ENCODE measurements at regions of chr4 and their contacts with region 1.

Region 1: DNA sequence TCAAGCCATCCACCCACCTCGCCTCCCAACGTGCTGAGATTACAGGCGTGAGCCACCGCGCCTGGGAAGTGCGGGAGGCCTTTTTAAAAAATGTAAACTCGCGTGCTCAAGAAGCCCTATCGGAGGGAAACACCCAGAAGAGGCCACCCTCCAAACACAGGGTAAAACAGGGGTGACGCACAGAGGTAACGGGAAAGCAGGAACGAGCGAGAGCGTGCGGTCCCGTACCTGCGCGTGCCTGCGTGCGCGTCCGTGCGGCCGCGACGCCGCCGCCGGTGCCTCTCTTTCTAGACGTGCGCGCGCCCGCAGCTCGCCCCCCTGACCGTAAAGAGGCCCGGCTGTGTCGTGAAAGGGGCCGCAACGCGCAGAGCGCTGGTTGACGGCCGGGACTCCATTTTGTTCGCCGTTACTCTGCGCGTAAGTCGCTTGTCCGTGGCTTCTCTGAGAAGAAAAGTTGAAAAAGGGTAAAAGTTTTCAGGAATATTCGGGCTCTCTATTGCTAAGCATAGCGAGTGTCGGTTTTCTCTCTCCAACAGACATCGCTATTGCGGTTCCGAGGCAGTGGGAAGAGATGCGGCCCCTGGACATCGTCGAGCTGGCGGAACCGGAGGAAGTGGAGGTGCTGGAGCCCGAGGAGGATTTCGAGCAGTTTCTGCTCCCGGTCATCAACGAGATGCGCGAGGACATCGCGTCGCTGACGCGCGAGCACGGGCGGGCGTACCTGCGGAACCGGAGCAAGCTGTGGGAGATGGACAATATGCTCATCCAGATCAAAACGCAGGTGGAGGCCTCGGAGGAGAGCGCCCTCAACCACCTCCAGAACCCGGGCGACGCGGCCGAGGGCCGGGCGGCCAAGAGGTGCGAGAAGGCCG is at the start of gene MRFAP1:
- DNase-seq: peak; percentile 96
- H3K4me3 Mint-ChIP-seq: peak within 1 kb of the TSS; percentile 98
- H3K27ac Mint-ChIP-seq: peak within 1 kb of the TSS; percentile 99
- H3K4me1 Mint-ChIP-seq: peaks cover 28% of the 10 kb centered on the region
- H3K27me3 Mint-ChIP-seq: no peaks in the 10 kb centered on the region
- total RNA-seq, gene MRFAP1: 150 to 151 TPM

Region 2: DNA sequence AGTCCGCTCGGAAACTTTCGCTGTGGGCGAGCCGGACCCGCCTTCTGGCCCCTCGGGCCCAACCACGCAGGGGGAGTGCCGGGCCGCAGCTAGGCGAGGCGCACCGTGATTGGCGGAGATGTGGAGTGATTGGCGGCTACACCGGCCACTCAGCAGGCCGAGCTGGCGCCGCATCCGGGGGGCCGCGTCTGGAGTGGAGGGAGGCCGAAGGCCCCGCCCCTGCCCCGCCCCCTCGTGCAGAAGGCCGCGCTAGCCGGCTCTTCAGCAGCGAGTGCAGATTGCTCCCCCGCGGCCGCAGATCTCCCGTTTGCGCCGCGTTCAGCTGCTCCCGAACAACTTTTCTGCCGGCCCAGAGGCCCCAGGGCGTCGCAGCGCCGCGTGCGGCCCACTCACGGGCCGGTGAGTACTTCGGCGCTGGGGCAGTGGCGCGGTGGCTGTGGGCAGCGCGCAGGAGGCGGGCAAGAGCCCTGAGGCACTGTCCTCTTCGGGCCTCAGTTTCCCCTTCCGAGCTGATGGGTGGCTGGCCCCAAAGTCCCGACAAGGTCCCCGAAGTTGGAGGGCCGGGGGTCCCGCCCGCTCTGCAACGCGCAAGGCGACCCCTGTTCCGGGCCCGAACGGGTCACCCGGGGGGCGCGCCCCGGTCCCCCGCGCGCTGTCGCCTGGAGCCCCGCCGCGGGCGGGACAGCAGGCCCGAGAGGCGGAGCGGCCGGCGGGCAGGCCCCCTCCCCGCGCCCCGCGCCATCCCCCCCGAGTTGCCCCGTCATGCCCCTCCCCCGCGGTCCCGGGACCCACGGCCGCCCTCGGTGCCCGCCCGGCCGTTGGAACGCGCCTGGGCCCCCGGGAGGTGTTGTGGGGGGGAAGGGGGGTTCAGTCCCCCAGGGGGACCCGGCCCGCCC is 370.7 kb before region 1 on chr4 and contains the start of gene WFS1:
- CTCF ChIA-PET with region 1: no interaction called
- intact Hi-C with region 1: loop called (anchors 2 kb)
- DNase-seq: peak; percentile 98
- H3K4me3 Mint-ChIP-seq: peak within 1 kb of the TSS; percentile 75
- H3K27ac Mint-ChIP-seq: no peak within 1 kb of the TSS
- H3K4me1 Mint-ChIP-seq: peaks cover 13% of the 10 kb centered on the region
- H3K27me3 Mint-ChIP-seq: peaks cover 2% of the 10 kb centered on the region
- total RNA-seq, gene WFS1: 3.6 to 4.5 TPM

Region 3: DNA sequence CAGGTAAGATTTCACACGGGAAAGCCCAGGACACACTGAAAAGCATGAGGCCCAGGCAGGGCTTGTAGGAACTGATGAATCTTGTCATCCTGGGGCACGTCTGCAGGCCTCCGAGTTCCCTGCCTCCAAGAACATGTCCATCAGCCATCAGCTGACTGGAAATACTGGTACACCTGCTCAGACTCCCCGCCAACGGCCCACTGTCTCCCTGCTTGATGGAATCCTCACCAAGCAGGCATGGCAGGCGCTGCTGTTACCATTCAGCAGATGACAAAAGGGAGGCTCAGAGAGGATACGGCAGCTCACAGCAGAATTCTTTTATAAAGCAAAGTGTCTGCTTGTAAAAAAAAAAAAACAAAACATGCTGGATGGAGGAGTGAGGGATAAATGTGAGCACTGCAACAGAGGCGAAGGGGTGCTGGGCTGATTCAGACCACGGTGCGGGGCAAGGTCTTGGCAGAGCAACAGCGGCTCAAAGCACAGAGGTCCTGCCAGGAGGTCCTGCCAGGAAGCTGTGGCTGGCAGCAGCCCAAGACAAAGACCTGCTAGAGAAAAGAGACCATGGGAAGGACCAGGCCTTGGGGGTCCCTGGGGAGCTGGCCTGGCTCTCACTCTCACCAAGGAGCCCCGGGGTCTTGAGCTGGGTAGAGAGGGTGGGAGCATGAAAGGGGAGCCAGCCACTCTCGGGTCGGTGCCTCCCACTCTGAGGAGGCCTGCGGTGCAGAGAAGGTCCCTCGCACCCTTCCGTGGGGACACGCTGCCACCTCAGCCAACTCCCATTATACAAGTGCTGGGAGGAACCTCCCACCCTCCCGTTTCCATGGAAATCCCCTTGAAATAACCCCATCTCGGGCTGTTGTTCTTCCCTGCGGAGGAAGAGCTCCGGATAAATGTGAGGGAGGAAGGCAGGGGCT is 193.7 kb before region 1 on chr4:
- CTCF ChIA-PET with region 1: no interaction called
- intact Hi-C with region 1: no loop called
- DNase-seq: no peak
- H3K4me3 Mint-ChIP-seq: no peak overlapping the region
- H3K27ac Mint-ChIP-seq: no peak overlapping the region
- H3K4me1 Mint-ChIP-seq: no peaks in the 10 kb centered on the region
- H3K27me3 Mint-ChIP-seq: peaks cover 2% of the 10 kb centered on the region

Region 4: GRCh38 chr4:6500481-6501140 is 139.9 kb before region 1 on chr4:
- CTCF ChIA-PET with region 1: no interaction called
- intact Hi-C with region 1: no loop called
- DNase-seq: no peak
- H3K4me3 Mint-ChIP-seq: no peak overlapping the region
- H3K27ac Mint-ChIP-seq: no peak overlapping the region
- H3K4me1 Mint-ChIP-seq: no peaks in the 10 kb centered on the region
- H3K27me3 Mint-ChIP-seq: peaks cover 7% of the 10 kb centered on the region

Region 5: GRCh38 chr4:6658597-6659075 is 18.1 kb after region 1 on chr4:
- CTCF ChIA-PET with region 1: interaction called, 8 read pairs
- intact Hi-C with region 1: loop called (anchors 2 kb)
- DNase-seq: peak; percentile 54
- H3K4me3 Mint-ChIP-seq: peak overlapping the region; percentile 67
- H3K27ac Mint-ChIP-seq: no peak overlapping the region
- H3K4me1 Mint-ChIP-seq: peaks cover 15% of the 10 kb centered on the region
- H3K27me3 Mint-ChIP-seq: no peaks in the 10 kb centered on the region

Region 6: DNA sequence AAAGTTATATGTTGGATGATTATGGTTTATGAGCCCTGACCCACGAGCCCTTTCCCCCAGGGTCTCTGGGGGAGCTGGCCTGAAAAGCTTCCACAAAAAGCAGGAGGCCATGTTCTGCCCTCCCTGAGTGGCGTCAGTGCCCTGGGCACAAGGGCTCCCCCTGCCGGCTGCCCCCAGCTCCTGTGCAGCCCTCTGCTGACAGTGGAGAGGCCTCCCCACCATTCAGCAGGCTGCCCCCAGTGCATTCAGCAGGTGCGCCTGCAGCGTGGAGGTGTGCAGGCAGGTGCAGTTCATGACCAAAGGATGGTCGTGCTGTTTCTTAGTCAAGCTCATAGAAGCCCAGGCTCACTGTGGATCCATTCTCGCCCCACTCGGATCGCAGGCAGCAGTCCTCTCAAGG is 40.7 kb after region 1 on chr4:
- CTCF ChIA-PET with region 1: no interaction called
- intact Hi-C with region 1: no loop called
- DNase-seq: no peak
- H3K4me3 Mint-ChIP-seq: no peak overlapping the region
- H3K27ac Mint-ChIP-seq: no peak overlapping the region
- H3K4me1 Mint-ChIP-seq: peaks cover 29% of the 10 kb centered on the region
- H3K27me3 Mint-ChIP-seq: no peaks in the 10 kb centered on the region

Region 7: DNA sequence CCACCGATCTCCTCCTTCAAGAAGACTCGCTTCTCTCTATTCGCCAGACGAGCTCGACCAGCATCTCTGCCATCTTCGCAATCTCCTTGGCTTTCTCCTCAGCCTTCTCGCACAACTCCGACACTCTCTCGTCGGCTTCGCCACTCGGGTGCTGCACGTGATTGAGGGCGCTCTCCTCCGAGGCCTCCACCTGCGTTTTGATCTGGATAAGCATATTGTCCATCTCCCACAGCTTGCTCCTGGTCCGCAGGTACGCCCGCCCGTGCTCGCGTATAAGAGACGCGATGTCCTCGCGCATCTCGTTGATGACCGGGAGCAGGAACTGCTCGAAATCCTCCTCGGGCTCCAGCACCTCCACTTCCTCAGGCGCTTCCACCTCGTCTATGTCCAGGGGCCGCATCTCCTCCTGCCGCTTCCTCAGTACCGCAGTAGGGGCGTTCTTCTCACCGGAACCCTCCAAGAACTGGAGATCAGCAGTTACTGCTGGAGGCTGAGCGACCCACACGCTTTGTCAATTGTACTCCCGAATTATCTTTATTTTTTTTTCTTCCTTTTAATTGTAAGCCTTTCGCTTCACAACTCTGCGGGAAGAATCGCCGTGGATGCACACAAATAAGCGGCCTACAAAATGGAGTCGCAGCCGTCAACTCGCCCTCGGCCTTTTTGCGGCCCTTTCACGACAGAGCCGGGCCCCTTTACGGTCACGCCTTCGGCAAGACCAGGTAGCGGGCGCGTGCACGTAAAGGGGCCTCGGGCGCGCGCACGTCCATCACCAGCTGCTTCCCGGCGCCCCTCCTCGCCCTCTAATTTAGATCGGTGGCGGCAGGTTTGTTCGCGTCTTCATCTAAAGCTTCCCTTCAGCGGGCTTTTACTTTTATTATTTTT is 68.9 kb after region 1 on chr4 and contains the start of gene MRFAP1L1:
- CTCF ChIA-PET with region 1: no interaction called
- intact Hi-C with region 1: loop called (anchors 1 kb)
- DNase-seq: peak; percentile 98
- H3K4me3 Mint-ChIP-seq: peak within 1 kb of the TSS; percentile 98
- H3K27ac Mint-ChIP-seq: peak within 1 kb of the TSS; percentile 98
- H3K4me1 Mint-ChIP-seq: peaks cover 49% of the 10 kb centered on the region
- H3K27me3 Mint-ChIP-seq: no peaks in the 10 kb centered on the region
- total RNA-seq, gene MRFAP1L1: 37.0 to 38.6 TPM

Region 8: GRCh38 chr4:6783053-6783981 is 142.8 kb after region 1 on chr4:
- CTCF ChIA-PET with region 1: no interaction called
- intact Hi-C with region 1: loop called (anchors 1 kb)
- DNase-seq: peak; percentile 91
- H3K4me3 Mint-ChIP-seq: peak overlapping the region; percentile 81
- H3K27ac Mint-ChIP-seq: peak overlapping the region; percentile 78
- H3K4me1 Mint-ChIP-seq: peaks cover 51% of the 10 kb centered on the region
- H3K27me3 Mint-ChIP-seq: no peaks in the 10 kb centered on the region

Region 9: DNA sequence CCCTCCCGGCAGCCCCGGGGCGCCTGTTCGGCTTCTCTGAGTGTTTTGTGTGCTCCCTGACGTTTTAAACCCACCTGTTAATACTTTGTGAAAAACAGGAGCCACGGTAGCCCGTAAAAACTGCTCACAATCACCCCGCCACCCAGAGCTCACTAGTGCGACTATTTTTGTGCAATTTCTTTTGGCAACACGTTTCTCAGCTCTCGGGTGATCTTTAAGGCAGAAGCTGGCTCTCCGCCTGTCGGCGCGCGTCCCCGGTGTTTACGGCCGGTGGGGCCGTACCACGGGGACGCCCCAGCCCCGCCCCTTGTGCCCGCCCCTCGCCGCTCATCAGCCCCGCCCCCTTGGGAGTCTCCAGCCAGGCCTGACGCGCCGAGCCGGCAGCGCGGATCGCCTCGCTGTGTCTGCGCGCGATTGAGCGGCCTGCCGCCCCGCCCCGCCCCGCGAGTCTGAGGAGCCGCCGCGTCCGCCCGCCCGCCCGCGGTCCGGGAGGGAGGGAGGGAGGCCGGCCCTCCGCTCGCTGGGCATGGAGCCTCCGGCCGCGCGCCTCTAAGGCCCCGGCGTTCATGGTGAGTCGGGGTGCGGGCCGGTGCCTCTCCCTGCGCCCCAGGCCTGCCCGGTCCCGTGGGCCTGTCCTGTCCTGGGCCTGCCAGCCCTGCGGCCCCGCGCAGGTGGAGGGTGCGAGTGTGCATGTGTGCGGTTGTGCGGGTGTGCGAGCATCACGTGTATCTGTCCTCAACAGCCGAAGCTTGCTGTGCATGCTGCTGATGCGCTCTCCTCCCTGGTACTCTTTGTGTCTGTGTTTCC is 346.5 kb after region 1 on chr4:
- CTCF ChIA-PET with region 1: no interaction called
- intact Hi-C with region 1: loop called (anchors 1 kb)
- DNase-seq: peak; percentile 94
- H3K4me3 Mint-ChIP-seq: peak overlapping the region; percentile 94
- H3K27ac Mint-ChIP-seq: peak overlapping the region; percentile 93
- H3K4me1 Mint-ChIP-seq: peaks cover 70% of the 10 kb centered on the region
- H3K27me3 Mint-ChIP-seq: no peaks in the 10 kb centered on the region